WTC11 (cell line): ENCODE measurements at regions of chr2 and their contacts with region 1.

Region 1: GRCh38 chr2:71276311-71277146 is 49.6 kb upstream of the PAIP2B start:
- DNase-seq: peak; percentile 98
- ATAC-seq: peak; percentile 95
- H3K4me3 Mint-ChIP-seq: peak overlapping the region; percentile 80
- H3K27ac Mint-ChIP-seq: no peak overlapping the region
- H3K4me1 Mint-ChIP-seq: peaks cover 38% of the 10 kb centered on the region
- H3K27me3 Mint-ChIP-seq: peaks cover 55% of the 10 kb centered on the region
- CTCF ChIP-seq: no peak

Region 2: DNA sequence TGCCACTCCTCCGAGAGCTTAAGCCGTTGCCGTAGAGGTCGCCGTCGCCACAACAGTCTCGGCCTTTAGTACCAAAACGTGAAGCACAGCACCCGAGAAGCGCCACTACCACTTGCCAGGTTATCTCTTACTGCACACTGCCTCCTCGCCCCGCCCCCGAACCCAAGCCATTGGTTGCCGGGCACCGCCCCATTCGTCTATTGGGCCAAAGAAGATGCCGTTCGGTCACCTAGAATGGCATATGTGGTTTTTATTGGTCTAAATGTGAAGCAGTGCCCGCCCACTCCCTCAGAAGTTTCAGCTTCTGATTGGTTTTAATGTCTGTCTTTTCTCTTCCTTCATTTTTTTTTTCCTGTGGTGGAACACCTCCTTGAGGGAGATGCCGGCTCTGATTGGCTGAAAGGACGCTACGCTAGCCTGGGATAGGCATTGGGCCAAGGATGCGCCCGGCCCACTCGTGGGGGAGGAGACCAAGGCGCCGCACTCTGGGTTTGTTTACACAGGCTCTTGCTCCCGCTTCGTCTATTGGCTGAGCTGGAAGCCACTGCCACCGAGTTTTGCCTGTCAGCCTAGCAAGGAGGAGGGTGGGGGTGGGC is 49.5 kb before region 1 on chr2 and contains the start of gene PAIP2B:
- CTCF ChIA-PET with region 1: interaction called, 20 read pairs
- POLR2A ChIA-PET with region 1: interaction called, 14 read pairs
- DNase-seq: peak; percentile 99
- ATAC-seq: peak; percentile 97
- H3K4me3 Mint-ChIP-seq: peak within 1 kb of the TSS; percentile 98
- H3K27ac Mint-ChIP-seq: peak within 1 kb of the TSS; percentile 96
- H3K4me1 Mint-ChIP-seq: peaks cover 12% of the 10 kb centered on the region
- H3K27me3 Mint-ChIP-seq: peaks cover 8% of the 10 kb centered on the region; the same call in 1 of the 2 replicates
- CTCF ChIP-seq: no peak
- total RNA-seq, gene PAIP2B: 19.3 to 22.4 TPM (median 22.2 TPM) in 3 replicates